Activated T-helper 1 cell treated with anti-CD3 and anti-CD28 coated beads, Interleukin-12 subunit alpha, Interleukin-12 subunit beta, Interleukin-2, Interleukin-4 antibody, amounts not matched to agents 30 ng/mL and 10 ng/mL and 1 ng/mL, durations not matched to agents 14 hours and 24 hours and 36 hours (primary cell): ENCODE measurements at regions of chr13 and their contacts with region 1.

Region 1: DNA sequence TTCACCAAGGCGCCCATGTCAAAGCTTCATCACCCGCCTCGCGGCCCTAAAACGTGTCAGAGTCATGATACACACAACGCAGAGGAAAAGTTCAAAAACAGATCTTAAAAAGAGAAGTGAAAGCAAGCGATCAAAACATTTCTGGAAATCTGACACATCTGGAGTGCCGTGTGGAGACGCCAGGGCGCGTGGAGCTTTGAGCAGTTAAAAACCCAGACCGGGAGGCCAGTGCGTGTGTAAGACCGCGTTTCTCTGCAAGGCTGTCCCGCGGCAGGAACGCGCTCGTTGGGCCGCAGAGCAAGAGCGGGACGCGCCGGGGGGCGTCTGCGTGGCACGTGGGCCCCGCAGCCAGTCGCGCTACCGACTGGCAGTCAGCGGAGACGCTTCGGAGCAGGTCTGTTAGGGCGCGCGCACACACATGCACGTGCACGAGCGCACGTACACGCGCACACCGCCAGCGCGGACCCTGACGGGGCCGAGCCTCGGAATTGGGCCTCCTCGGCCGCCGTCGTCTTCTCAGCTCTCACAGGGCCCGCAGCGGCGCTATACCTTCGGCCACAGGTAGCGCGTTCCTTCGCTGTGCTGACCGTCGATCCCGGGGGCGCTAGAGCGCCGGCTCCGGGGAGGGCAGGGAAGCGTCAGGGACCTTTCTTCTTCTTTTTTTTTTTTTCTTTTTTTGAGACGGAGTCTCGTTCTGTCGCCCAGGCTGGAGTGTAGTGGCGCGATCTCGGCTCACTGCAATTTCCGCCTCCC is 35.8 kb downstream of the RNF6 start:
- DNase-seq: peak; percentile 89
- H3K4me3 Mint-ChIP-seq: peak overlapping the region; percentile 86
- H3K27ac Mint-ChIP-seq: peak overlapping the region; percentile 97
- H3K4me1 Mint-ChIP-seq: peaks cover 25% of the 10 kb centered on the region
- H3K27me3 Mint-ChIP-seq: no peaks in the 10 kb centered on the region

Region 2: DNA sequence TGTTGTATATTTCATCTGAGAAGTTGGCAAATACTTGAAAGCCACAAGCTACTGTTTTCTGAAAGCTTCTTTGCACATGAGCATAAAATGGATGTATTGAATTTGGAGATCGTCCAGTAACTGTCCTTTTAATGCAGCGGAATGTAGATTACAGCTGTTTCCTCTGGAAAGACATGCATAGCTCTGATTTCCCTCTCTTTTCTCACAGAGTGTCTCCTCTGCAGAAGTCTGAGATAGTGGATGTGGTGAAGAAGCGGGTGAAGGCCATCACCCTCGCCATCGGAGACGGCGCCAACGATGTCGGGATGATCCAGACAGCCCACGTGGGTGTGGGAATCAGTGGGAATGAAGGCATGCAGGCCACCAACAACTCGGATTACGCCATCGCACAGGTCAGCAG is 417.5 kb before region 1 on chr13:
- intact Hi-C with region 1: loop called (anchors 10 kb)
- DNase-seq: no peak
- H3K4me3 Mint-ChIP-seq: no peak overlapping the region
- H3K27ac Mint-ChIP-seq: no peak overlapping the region
- H3K4me1 Mint-ChIP-seq: peaks cover 27% of the 10 kb centered on the region
- H3K27me3 Mint-ChIP-seq: no peaks in the 10 kb centered on the region

Region 3: DNA sequence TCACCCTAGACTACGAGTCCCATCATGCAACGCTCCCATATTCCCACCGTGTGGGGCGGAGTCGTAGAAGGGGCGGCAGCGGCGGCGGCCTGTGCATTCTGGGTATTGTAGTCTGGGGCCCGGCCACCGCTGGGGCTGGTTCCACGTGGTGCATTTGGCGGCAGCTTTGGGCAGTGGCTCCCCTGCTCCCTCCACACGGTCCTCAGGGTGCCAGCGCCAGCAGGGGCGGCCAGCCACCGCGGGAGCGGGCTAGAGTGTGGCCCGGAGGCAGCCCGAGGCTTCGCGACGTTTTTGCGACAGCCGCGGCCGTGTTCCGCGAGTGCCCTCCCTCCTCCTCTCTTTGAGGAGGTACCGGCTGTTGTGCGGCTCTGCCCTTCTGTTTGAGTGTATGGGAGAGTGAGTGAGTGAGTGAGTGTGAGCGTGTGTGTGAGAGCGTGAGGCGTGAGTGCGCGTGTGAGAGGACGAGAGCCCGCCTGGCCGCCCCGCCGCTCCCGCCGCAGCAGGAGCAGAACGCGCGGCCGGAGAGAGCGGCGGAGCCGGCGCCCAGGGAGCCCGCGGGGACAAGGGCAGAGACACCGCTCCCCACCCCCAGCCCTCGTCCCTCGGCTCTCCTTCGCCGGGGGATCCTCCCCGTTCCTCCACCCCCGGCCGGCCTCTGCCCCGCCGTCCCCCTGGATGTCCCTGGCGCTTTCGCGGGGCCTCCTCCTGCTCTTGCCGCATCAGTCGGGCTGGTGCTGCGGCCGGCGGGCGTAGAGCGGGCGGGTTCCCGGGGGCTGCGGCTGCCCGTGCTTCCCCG is 67.7 kb after region 1 on chr13 and contains the start of gene CDK8:
- intact Hi-C with region 1: loop called (anchors 1 kb)
- DNase-seq: peak; percentile 80
- H3K4me3 Mint-ChIP-seq: peak within 1 kb of the TSS; percentile 91
- H3K27ac Mint-ChIP-seq: peak within 1 kb of the TSS; percentile 88
- H3K4me1 Mint-ChIP-seq: peaks cover 25% of the 10 kb centered on the region
- H3K27me3 Mint-ChIP-seq: peaks cover 2% of the 10 kb centered on the region
- total RNA-seq, gene CDK8: 18.4 and 18.9 TPM in 2 replicates

Region 4: GRCh38 chr13:26482451-26483197 is 296.3 kb after region 1 on chr13:
- intact Hi-C with region 1: loop called (anchors 1 kb)
- DNase-seq: peak; percentile 53
- H3K4me3 Mint-ChIP-seq: no peak overlapping the region
- H3K27ac Mint-ChIP-seq: no peak overlapping the region
- H3K4me1 Mint-ChIP-seq: peaks cover 7% of the 10 kb centered on the region
- H3K27me3 Mint-ChIP-seq: no peaks in the 10 kb centered on the region

Region 5: GRCh38 chr13:26628706-26629105 is 442.4 kb after region 1 on chr13:
- intact Hi-C with region 1: loop called (anchors 5 kb)
- DNase-seq: no peak
- H3K4me3 Mint-ChIP-seq: no peak overlapping the region
- H3K27ac Mint-ChIP-seq: no peak overlapping the region
- H3K4me1 Mint-ChIP-seq: no peaks in the 10 kb centered on the region
- H3K27me3 Mint-ChIP-seq: peaks cover 2% of the 10 kb centered on the region

Region 6: GRCh38 chr13:27620377-27621115 is 1434.3 kb after region 1 on chr13 and contains the start of gene LNX2:
- intact Hi-C with region 1: loop called (anchors 2 kb)
- DNase-seq: peak; percentile 97
- H3K4me3 Mint-ChIP-seq: peak within 1 kb of the TSS; percentile 88
- H3K27ac Mint-ChIP-seq: peak within 1 kb of the TSS; percentile 88
- H3K4me1 Mint-ChIP-seq: peaks cover 57% of the 10 kb centered on the region
- H3K27me3 Mint-ChIP-seq: no peaks in the 10 kb centered on the region
- total RNA-seq, gene LNX2: 4.1 and 4.5 TPM in 2 replicates